Posterior vena cava (tissue), 2 donors: ENCODE measurements at regions of chr20 and their contacts with region 1.

Region 1: GRCh38 chr20:41329435-41330342 is 10.9 kb upstream of the LPIN3 start:
- DNase-seq: peak; percentile 95

Region 2: DNA sequence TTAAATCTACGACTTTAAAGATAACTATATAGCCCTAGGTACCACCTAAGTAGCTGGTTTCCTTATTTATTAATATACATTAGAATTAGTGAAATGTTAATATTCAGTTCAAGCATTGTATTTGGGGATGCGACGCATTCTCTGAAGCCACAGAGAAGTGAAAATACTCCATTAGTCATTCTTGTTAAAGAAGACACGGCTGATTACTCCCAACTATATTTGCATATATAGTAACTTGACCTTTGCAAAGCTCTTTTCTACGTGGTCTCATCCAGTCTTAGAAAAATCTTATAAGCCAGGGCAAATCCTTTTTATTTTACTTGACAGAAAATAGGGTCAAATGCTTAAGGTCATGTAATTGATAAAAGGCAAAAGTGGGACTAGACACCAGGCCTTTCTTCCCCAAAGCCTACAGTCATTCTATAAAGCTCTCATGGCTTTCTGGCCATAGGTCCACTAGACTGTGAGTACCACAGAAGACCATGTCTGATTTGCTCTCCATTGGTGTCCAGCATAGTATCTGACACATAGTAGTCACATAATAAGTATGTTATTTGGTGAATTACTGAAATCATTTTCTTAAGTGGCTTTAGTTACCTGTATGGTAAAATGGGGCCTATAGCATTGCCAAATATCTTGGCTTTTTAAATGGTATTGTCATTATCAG is 23.5 kb before region 1 on chr20:
- intact Hi-C with region 1: no loop called
- DNase-seq: no peak

Region 3: GRCh38 chr20:41317536-41318270 is 12.0 kb before region 1 on chr20 and contains the start of gene ZHX3:
- intact Hi-C with region 1: loop called in 1 of 2 experiments (anchors 2 kb)
- DNase-seq: peak; percentile 99
- total RNA-seq, gene ZHX3: 88.2 to 92.9 TPM